Natural killer cell (primary cell): ENCODE measurements at regions of chr12 and their contacts with region 1.

Region 1: GRCh38 chr12:57632694-57633477 is at the start of gene B4GALNT1:
- DNase-seq: peak; percentile 64 to 82
- ATAC-seq: peak; percentile 87 to 90 (median 89)
- H3K4me3 ChIP-seq: peak within 1 kb of the TSS; percentile 32
- H3K4me3 Mint-ChIP-seq: peak within 1 kb of the TSS; percentile 79
- H3K27ac ChIP-seq: no peak within 1 kb of the TSS
- H3K27ac Mint-ChIP-seq: peak within 1 kb of the TSS in 1 of 2 donors; percentile 75
- H3K4me1 ChIP-seq: peaks cover 19% of the 10 kb centered on the region
- H3K4me1 Mint-ChIP-seq: peaks cover 5 to 19% of the 10 kb centered on the region in 2 donors
- H3K27me3 ChIP-seq: peaks cover 44% of the 10 kb centered on the region
- H3K27me3 Mint-ChIP-seq: peaks cover 41 to 56% of the 10 kb centered on the region in 2 donors
- CTCF ChIP-seq: peak; percentile 88
- total RNA-seq, gene B4GALNT1: 0.38 to 0.59 (median 0.48) TPM

Region 2: DNA sequence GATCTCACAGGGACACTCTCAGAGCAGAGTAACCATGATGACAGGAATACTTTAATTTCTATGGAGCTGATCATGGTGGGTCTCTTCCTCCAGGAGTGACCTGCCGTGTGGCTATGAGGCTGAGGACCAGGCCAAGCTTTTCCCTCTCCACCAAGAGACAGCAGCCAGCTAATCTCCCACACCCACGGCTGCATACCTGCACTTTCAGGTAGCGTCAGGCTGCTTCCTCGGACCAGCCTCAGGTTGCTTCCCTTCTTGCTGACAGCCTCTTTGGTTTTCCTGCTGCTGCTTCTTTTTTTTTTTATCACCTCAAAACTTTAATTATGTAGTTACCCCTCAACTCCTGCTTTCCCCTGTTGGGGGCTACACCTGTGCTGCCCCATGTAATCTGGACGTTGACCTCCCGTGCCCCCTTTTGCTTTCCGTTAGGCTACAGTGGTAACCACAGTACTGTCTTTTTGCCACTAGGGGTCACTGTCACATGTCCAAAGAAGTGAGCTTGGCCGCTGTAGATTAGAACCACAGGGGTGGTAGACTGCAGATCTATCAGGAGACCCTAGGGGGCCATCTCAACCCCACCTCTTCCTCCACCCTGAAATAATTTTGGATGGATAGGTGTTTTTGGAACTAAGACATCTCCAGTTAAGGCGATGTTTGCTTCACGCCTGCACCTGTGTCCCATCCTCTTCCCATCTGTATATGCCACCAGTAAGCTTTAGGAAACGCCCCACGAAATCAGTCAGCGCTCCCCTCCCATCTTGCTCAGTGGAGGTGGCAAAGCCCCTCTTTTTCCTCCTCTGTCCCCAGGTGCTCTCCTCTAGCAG is 49.7 kb before region 1 on chr12:
- intact Hi-C with region 1: loop called (anchors 2 kb)
- DNase-seq: peak; percentile 45 to 90
- ATAC-seq: peak; percentile 99 to 100 (median 100)
- H3K4me3 ChIP-seq: no peak overlapping the region
- H3K4me3 Mint-ChIP-seq: no peak overlapping the region
- H3K27ac ChIP-seq: no peak overlapping the region
- H3K27ac Mint-ChIP-seq: peak overlapping the region in 1 of 2 donors; percentile 24
- H3K4me1 ChIP-seq: no peaks in the 10 kb centered on the region
- H3K4me1 Mint-ChIP-seq: peaks cover 8 to 9% of the 10 kb centered on the region in 2 donors
- H3K27me3 ChIP-seq: peaks cover 2% of the 10 kb centered on the region
- H3K27me3 Mint-ChIP-seq: peaks cover 13 to 20% of the 10 kb centered on the region in 2 donors
- CTCF ChIP-seq: peak; percentile 90

Region 3: DNA sequence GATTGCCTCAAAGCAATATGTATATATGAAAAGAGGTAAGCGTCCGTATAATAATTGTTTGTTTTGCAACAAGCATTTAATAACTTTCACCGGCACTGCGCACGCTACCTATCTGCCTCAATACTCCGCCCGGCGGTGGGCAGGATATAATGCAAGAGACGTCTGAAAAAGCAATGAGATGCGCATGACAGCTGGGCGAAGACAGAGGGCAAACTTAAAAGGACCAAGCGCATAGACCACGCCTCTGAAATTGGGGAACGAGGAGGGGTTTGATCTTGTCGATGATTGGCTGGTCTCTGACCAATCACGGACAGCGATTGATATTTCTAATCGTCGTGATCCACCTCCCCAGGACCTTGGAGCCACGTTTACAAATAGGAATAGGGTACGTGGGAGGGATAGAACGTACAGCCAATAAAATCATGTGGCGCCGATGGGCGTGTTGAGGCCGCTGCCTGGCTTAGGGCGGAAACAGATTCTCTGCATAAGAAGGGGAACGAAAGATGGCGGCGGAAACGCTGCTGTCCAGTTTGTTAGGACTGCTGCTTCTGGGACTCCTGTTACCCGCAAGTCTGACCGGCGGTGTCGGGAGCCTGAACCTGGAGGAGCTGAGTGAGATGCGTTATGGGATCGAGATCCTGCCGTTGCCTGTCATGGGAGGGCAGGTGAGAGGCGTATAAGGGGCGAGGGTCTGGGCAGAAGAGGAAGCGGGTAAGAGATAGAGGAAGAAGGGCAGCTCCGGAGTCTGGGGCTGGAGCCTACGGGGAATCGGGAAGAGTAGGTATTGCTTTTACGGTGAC is 61.0 kb after region 1 on chr12 and contains the start of gene OS9:
- intact Hi-C with region 1: no loop called
- DNase-seq: peak; percentile 88 to 100
- ATAC-seq: peak; percentile 91 to 98 (median 92)
- H3K4me3 ChIP-seq: peak within 1 kb of the TSS; percentile 82
- H3K4me3 Mint-ChIP-seq: no peak within 1 kb of the TSS
- H3K27ac ChIP-seq: peak within 1 kb of the TSS; percentile 57
- H3K27ac Mint-ChIP-seq: no peak within 1 kb of the TSS
- H3K4me1 ChIP-seq: peaks cover 14% of the 10 kb centered on the region
- H3K4me1 Mint-ChIP-seq: peaks cover 2 to 8% of the 10 kb centered on the region in 2 donors
- H3K27me3 ChIP-seq: no peaks in the 10 kb centered on the region
- H3K27me3 Mint-ChIP-seq: peaks cover 3 to 15% of the 10 kb centered on the region in 2 donors
- CTCF ChIP-seq: peak; percentile 85
- total RNA-seq, gene OS9: 185 to 221 (median 198) TPM

Region 4: GRCh38 chr12:58950739-58951100 is 1317.8 kb after region 1 on chr12:
- intact Hi-C with region 1: no loop called
- DNase-seq: no peak
- ATAC-seq: no peak
- H3K4me3 ChIP-seq: no peak overlapping the region
- H3K4me3 Mint-ChIP-seq: no peak overlapping the region
- H3K27ac ChIP-seq: no peak overlapping the region
- H3K27ac Mint-ChIP-seq: no peak overlapping the region
- H3K4me1 ChIP-seq: no peaks in the 10 kb centered on the region
- H3K4me1 Mint-ChIP-seq: no peaks in the 10 kb centered on the region
- H3K27me3 ChIP-seq: no peaks in the 10 kb centered on the region
- H3K27me3 Mint-ChIP-seq: no peaks in the 10 kb centered on the region
- CTCF ChIP-seq: no peak